B cell (primary cell): ENCODE measurements at regions of chr19 and their contacts with region 1.

Region 1: GRCh38 chr19:8580710-8581281 is 3.6 kb upstream of the MYO1F start:
- DNase-seq: peak; percentile 91
- ATAC-seq: peak; percentile 76
- H3K4me3 ChIP-seq: no peak overlapping the region
- H3K4me3 Mint-ChIP-seq: no peak overlapping the region
- H3K27ac ChIP-seq: no peak overlapping the region
- H3K27ac Mint-ChIP-seq: no peak overlapping the region
- H3K4me1 ChIP-seq: peaks cover 27 to 44% of the 10 kb centered on the region in 2 donors
- H3K4me1 Mint-ChIP-seq: peaks cover 29% of the 10 kb centered on the region
- H3K27me3 ChIP-seq: no peaks in the 10 kb centered on the region
- H3K27me3 Mint-ChIP-seq: no peaks in the 10 kb centered on the region
- CTCF ChIP-seq: peak; percentile 99

Region 2: GRCh38 chr19:8412783-8413628 is 167.8 kb before region 1 on chr19 and contains the start of gene MARCHF2:
- CTCF ChIA-PET with region 1: interaction called, 49 read pairs
- POLR2A ChIA-PET with region 1: interaction called, 5 read pairs
- intact Hi-C with region 1: no loop called
- DNase-seq: peak; percentile 98
- ATAC-seq: peak; percentile 99
- H3K4me3 ChIP-seq: peak within 1 kb of the TSS; percentile 52 to 82 (median 65)
- H3K4me3 Mint-ChIP-seq: peak within 1 kb of the TSS; percentile 70
- H3K27ac ChIP-seq: peak within 1 kb of the TSS in 1 of 2 donors; percentile 59
- H3K27ac Mint-ChIP-seq: peak within 1 kb of the TSS; percentile 16
- H3K4me1 ChIP-seq: peaks cover 5 to 9% of the 10 kb centered on the region in 2 donors
- H3K4me1 Mint-ChIP-seq: peaks cover 11% of the 10 kb centered on the region
- H3K27me3 ChIP-seq: no peaks in the 10 kb centered on the region
- H3K27me3 Mint-ChIP-seq: no peaks in the 10 kb centered on the region
- CTCF ChIP-seq: peak; percentile 76
- total RNA-seq, gene MARCHF2: 22.9 and 24.8 TPM in 2 replicates

Region 3: DNA sequence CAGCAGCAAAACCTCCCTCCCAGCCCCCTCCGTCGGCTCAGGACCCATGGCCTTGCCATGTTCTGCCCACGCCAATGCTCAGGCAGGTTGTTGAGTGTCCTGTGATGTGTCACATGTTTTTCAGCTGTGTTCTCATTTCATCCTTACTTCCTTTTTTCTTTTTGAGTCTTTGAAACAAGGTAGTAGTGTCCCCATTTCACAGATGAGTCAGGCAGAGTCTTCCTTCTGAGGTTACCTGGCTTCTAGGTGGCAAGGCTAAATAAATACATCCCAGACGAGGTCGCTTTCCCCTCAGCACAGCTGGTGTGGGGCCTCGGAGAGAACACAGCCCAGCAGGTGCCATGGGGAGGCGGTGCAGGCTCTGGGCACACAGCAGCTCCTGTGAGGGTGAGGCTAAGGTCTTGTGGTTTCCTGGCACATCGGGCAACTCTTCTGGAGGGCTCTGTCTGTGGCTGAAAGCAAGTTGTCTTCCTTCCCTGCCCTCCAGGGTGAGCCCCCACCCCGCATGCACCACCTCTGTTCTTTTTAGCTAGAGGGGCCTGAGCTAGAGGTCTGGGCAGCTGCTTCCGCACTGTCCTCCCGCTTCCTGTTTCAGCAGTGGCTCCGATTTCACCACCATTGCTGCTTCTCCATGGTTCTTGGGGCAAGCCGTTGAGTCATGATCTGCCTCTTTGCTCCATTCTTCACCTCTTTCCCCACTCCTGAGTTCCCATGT is 93.5 kb before region 1 on chr19:
- CTCF ChIA-PET with region 1: interaction called, 10 read pairs
- POLR2A ChIA-PET with region 1: no interaction called
- intact Hi-C with region 1: no loop called
- DNase-seq: peak; percentile 48
- ATAC-seq: peak; percentile 70
- H3K4me3 ChIP-seq: no peak overlapping the region
- H3K4me3 Mint-ChIP-seq: peak overlapping the region; percentile 37
- H3K27ac ChIP-seq: peak overlapping the region; percentile 29 to 50
- H3K27ac Mint-ChIP-seq: peak overlapping the region; percentile 85
- H3K4me1 ChIP-seq: peaks cover 11 to 21% of the 10 kb centered on the region in 2 donors
- H3K4me1 Mint-ChIP-seq: peaks cover 22% of the 10 kb centered on the region
- H3K27me3 ChIP-seq: no peaks in the 10 kb centered on the region
- H3K27me3 Mint-ChIP-seq: no peaks in the 10 kb centered on the region
- CTCF ChIP-seq: no peak

Region 4: GRCh38 chr19:8525401-8525684 is 55.5 kb before region 1 on chr19:
- CTCF ChIA-PET with region 1: interaction called, 12 read pairs
- POLR2A ChIA-PET with region 1: interaction called, 5 read pairs
- intact Hi-C with region 1: no loop called
- DNase-seq: no peak
- ATAC-seq: no peak
- H3K4me3 ChIP-seq: no peak overlapping the region
- H3K4me3 Mint-ChIP-seq: no peak overlapping the region
- H3K27ac ChIP-seq: no peak overlapping the region
- H3K27ac Mint-ChIP-seq: no peak overlapping the region
- H3K4me1 ChIP-seq: no peaks in the 10 kb centered on the region
- H3K4me1 Mint-ChIP-seq: peaks cover 2% of the 10 kb centered on the region
- H3K27me3 ChIP-seq: no peaks in the 10 kb centered on the region
- H3K27me3 Mint-ChIP-seq: no peaks in the 10 kb centered on the region
- CTCF ChIP-seq: no peak

Region 5: GRCh38 chr19:8592231-8593009 is 11.6 kb after region 1 on chr19:
- CTCF ChIA-PET with region 1: interaction called, 11 read pairs
- POLR2A ChIA-PET with region 1: no interaction called
- intact Hi-C with region 1: no loop called
- DNase-seq: peak; percentile 87
- ATAC-seq: peak; percentile 79
- H3K4me3 ChIP-seq: peak overlapping the region in 4 of 5 experiments; percentile 19 to 58 (median 44)
- H3K4me3 Mint-ChIP-seq: peak overlapping the region; percentile 85
- H3K27ac ChIP-seq: no peak overlapping the region
- H3K27ac Mint-ChIP-seq: peak overlapping the region; percentile 4
- H3K4me1 ChIP-seq: peaks cover 17% of the 10 kb centered on the region in 2 donors
- H3K4me1 Mint-ChIP-seq: peaks cover 15% of the 10 kb centered on the region
- H3K27me3 ChIP-seq: peaks cover 0 to 31% (median 17%) of the 10 kb centered on the region in 4 experiments
- H3K27me3 Mint-ChIP-seq: peaks cover 33% of the 10 kb centered on the region
- CTCF ChIP-seq: no peak

Region 6: DNA sequence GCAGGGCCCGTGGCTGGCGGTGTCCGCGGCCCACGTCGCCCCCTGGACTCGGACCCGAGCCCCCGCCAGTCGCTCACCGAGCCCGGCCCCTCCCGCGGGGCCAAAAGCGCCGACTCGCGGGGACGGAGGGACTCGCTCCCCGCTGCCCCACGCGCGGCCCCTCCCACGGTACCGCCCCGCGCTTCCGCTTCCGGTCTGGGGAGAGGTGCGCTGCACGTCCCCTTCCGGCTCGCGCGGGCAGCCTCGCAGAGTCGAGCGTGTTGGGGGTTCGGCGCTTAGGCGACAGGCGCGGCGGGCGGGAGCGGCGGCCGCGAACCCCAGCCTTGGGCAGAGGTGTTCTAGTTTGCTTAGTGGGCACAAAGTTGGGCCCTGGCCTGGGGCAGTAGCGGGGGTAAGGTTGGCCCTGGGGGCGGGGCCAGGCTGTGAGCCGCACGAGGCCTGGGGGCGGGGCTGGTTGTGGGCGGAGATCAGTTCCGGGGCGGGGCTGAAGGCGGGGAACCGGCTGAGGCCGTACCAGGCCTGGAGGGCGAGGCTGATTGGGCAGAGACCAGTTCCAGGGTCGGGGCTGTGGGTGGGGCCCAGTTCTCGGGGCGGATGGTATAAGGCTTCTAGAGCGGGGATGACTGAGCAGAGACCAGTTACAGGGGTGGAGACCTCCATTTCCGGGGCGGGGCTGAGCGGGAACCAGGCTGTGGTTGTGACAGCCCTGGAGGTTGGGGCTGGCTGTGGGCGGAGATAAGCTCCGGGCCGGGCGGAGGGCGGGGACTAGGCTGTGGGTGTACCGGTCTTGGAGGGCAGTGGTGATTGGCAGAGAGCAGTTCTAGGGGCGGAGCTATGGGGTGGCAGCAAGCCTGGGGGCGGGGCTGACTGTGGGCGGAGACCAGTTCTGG is 251.6 kb after region 1 on chr19 and contains the starts of genes MBD3L1 and ZNF558:
- CTCF ChIA-PET with region 1: no interaction called
- POLR2A ChIA-PET with region 1: no interaction called
- intact Hi-C with region 1: loop called (anchors 5 kb)
- DNase-seq: peak; percentile 98
- ATAC-seq: peak; percentile 79
- H3K4me3 ChIP-seq: peak within 1 kb of the TSS; percentile 61 to 97 (median 81)
- H3K4me3 Mint-ChIP-seq: peak within 1 kb of the TSS; percentile 91
- H3K27ac ChIP-seq: peak within 1 kb of the TSS; percentile 80 to 89
- H3K27ac Mint-ChIP-seq: peak within 1 kb of the TSS; percentile 96
- H3K4me1 ChIP-seq: peaks cover 7 to 16% of the 10 kb centered on the region in 2 donors
- H3K4me1 Mint-ChIP-seq: peaks cover 15% of the 10 kb centered on the region
- H3K27me3 ChIP-seq: no peaks in the 10 kb centered on the region
- H3K27me3 Mint-ChIP-seq: no peaks in the 10 kb centered on the region
- CTCF ChIP-seq: peak; percentile 48
- total RNA-seq, gene MBD3L1: not detected in 2 replicates
- total RNA-seq, gene ZNF558: 29.8 and 35.7 TPM in 2 replicates